AG04450 (cell line): ENCODE measurements at regions of chr1 and their contacts with region 1.

Region 1: DNA sequence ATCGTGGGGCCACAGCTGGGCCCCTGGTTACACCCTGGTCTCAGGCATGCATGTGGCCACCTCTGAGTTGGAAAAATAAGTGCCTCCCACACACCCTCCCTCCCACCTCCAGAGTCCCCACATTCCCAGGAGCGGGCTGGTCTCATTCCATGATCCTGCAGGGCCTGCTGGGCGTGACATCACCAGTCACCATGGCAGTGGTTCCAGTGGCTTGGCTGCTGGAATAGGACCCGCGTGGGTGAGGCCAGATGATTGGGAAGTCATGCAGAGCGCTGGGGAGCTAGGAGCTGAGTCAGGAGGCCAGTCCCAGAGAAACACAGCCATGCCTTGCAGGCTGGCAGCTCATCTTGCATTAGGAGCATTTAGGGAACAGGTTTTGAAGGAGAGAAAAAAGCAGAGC is 125.4 kb upstream of the TMEM51 start:
- DNase-seq: peak; percentile 24
- H3K4me3 ChIP-seq: no peak overlapping the region
- H3K27ac ChIP-seq: no peak overlapping the region
- H3K27me3 ChIP-seq: no peaks in the 10 kb centered on the region
- CTCF ChIP-seq: no peak

Region 2: GRCh38 chr1:14915356-14916054 is 112.6 kb before region 1 on chr1:
- CTCF ChIA-PET with region 1: interaction called, 34 read pairs
- POLR2A ChIA-PET with region 1: no interaction called
- DNase-seq: no peak
- H3K4me3 ChIP-seq: no peak overlapping the region
- H3K27ac ChIP-seq: no peak overlapping the region
- H3K27me3 ChIP-seq: no peaks in the 10 kb centered on the region
- CTCF ChIP-seq: peak; percentile 95

Region 3: DNA sequence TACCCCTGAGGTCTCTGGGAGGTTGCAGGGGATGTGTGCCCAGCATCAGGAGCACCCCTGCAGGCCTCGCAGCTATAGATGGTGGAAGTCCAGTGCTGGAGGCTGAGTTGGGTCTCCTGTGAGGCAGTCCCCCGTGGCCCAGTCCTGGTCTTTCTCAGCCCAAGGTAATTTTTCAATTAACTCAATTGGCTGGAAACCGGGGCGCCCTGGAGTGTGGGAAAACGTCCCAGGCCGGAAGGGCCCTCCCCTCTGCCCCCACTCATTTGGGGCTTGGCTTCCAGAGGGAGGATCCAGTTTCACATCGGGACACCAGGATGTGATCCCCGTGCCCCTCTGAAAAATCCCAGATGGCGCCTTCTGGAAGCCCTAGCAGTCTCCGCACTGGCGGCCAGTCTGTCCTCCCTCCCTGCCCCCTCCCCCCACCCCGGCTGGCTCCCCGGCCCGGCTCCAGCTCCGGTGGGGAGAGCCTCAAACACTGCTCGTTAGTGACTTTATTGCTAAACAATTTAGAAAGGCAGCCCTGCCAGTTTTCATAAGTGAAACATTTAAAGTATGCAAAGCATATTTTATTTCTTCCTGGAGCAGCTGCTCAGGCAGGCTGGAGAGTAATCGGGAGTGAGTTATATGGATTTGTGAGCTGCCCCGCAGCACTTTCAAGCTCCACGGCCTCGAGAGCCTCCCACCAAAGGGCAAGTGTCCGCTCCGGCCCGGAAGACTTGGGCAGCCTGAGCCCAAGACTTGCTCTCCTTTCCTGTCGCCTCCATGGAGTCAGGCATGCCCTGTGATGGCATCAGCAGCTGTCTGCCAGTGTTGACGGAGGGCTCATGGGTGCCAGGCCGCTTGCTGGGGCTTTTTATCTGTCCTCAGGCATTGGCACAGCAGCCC is 82.7 kb before region 1 on chr1:
- CTCF ChIA-PET with region 1: interaction called, 19 read pairs
- POLR2A ChIA-PET with region 1: no interaction called
- DNase-seq: peak; percentile 85
- H3K4me3 ChIP-seq: peak overlapping the region; percentile 52
- H3K27ac ChIP-seq: peak overlapping the region; percentile 98
- H3K27me3 ChIP-seq: no peaks in the 10 kb centered on the region
- CTCF ChIP-seq: no peak

Region 4: GRCh38 chr1:14987829-14988603 is 40.1 kb before region 1 on chr1:
- CTCF ChIA-PET with region 1: interaction called, 12 read pairs
- POLR2A ChIA-PET with region 1: no interaction called
- DNase-seq: no peak
- H3K4me3 ChIP-seq: no peak overlapping the region
- H3K27ac ChIP-seq: no peak overlapping the region
- H3K27me3 ChIP-seq: no peaks in the 10 kb centered on the region
- CTCF ChIP-seq: no peak

Region 5: DNA sequence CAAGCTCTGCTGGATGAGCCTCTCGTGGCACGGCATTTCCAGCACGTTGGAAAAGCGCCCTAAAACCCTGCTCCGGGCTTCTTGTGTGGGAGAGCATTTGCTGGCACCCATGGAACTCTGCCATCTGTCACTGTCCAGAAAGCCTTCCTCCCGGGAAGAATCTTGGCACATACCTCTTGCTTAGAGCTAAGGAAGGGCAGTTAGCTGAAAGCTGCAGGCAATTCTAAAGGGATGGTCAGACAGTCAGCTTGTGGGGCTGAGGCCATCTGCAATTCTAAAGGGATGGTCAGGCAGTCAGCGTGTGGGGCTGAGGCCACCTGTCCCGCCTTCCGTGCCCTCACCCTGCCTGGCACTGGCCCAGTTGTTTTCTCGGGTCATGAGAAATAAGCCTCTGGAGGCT is 13.6 kb before region 1 on chr1:
- CTCF ChIA-PET with region 1: interaction called, 28 read pairs
- POLR2A ChIA-PET with region 1: no interaction called
- DNase-seq: no peak
- H3K4me3 ChIP-seq: no peak overlapping the region
- H3K27ac ChIP-seq: no peak overlapping the region
- H3K27me3 ChIP-seq: no peaks in the 10 kb centered on the region
- CTCF ChIP-seq: no peak

Region 6: GRCh38 chr1:15046487-15047165 is 18.5 kb after region 1 on chr1:
- CTCF ChIA-PET with region 1: interaction called, 11 read pairs
- POLR2A ChIA-PET with region 1: no interaction called
- DNase-seq: peak; percentile 74
- H3K4me3 ChIP-seq: no peak overlapping the region
- H3K27ac ChIP-seq: peak overlapping the region; percentile 47
- H3K27me3 ChIP-seq: no peaks in the 10 kb centered on the region
- CTCF ChIP-seq: peak; percentile 98